H1 (cell line): ENCODE measurements at regions of chr2 and their contacts with region 1.

Region 1: DNA sequence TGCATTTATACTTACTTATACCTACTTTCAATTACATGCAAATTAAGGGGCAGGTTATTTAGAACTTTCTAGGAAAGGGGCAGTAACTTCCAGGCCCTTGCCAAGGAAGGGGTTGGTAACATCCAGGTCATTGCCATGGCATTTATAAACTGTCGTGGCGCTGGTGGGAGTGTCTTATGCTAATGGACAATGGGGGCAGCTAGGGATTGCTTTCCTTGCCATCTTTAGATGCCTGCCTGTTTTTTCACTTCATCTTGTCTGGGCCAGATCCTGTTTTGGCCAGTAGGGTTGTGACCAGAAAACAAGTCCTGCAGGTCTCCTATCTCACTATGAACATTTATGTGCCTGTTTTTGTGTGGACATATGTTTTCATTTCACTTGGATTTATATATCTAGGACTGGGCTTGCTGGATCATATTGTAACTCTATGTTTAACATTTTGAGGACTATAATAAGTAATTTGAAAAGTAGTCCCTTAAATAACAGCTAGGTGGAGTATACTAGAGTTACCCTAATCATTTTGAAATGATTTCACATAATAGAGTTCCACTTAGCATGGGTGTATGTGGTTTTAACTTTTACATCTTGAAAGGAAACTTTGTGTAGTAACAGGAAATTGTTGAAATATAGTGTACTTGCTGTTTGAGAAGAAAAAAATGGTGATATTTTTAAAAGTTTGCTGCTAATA is 56.1 kb downstream of the LCLAT1 start:
- DNase-seq: no peak
- H3K4me3 ChIP-seq: no peak overlapping the region
- H3K27ac ChIP-seq: no peak overlapping the region
- H3K4me1 ChIP-seq: peaks cover 0 to 3% (median 0%) of the 10 kb centered on the region in 4 experiments; a peak in 2 of 7 replicates
- H3K27me3 ChIP-seq: no peaks in the 10 kb centered on the region
- CTCF ChIP-seq: peak in 2 of 3 experiments; percentile 23 to 28; a peak in 1 of 4 replicates
- EP300 ChIP-seq: no peak
- POLR2A ChIP-seq: no peak
- RAD21 ChIP-seq: no peak

Region 2: DNA sequence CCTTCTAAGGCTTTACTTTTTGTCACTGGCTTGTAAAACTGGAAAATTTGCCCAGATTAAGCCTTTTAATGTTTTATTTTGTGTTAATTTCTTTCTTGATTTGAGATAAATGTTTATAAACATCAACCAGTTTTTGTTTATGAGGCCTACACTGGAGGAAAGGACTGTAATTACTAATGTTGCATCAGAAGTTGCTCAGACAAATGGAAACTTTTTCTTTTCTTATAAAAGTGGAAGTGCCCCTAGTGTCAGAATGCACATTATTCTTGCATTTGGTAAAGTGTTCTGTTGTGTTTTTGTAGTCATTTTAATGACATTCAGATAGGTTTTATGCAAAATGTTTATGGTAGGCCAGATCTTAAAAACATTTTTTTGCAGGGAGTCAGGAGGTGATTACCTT is 30.8 kb before region 1 on chr2:
- CTCF ChIA-PET with region 1: no interaction called
- POLR2A ChIA-PET with region 1: no interaction called
- DNase-seq: no peak
- H3K4me3 ChIP-seq: no peak overlapping the region
- H3K27ac ChIP-seq: no peak overlapping the region
- H3K4me1 ChIP-seq: no peaks in the 10 kb centered on the region
- H3K27me3 ChIP-seq: no peaks in the 10 kb centered on the region
- CTCF ChIP-seq: no peak
- EP300 ChIP-seq: no peak
- POLR2A ChIP-seq: no peak
- RAD21 ChIP-seq: no peak

Region 3: DNA sequence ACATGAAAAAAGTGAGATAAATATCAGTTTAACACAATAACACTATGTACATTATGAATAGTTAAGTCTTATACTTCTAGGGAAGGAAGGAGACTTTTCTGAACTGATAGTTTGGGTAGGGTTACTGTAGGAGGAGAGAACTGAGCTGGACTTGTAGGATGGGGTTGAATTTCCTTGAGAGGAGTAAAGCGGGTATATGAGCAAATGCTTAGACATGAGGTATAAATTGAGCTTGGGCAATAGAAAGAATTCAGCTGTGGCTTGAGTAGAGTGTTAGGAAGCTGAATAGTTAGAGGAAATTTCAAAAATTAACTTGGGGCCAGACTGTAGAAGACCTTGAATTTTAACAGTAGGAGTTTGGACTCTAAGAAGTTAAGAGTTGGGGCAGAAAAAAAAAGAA is 11.0 kb before region 1 on chr2:
- CTCF ChIA-PET with region 1: interaction called, 16 read pairs
- POLR2A ChIA-PET with region 1: no interaction called
- DNase-seq: no peak
- H3K4me3 ChIP-seq: no peak overlapping the region
- H3K27ac ChIP-seq: no peak overlapping the region
- H3K4me1 ChIP-seq: no peaks in the 10 kb centered on the region
- H3K27me3 ChIP-seq: no peaks in the 10 kb centered on the region
- CTCF ChIP-seq: no peak
- EP300 ChIP-seq: no peak
- POLR2A ChIP-seq: no peak
- RAD21 ChIP-seq: no peak

Region 4: GRCh38 chr2:30548386-30548785 is 45.2 kb after region 1 on chr2:
- CTCF ChIA-PET with region 1: no interaction called
- POLR2A ChIA-PET with region 1: no interaction called
- DNase-seq: no peak
- H3K4me3 ChIP-seq: no peak overlapping the region
- H3K27ac ChIP-seq: no peak overlapping the region
- H3K4me1 ChIP-seq: no peaks in the 10 kb centered on the region
- H3K27me3 ChIP-seq: no peaks in the 10 kb centered on the region
- CTCF ChIP-seq: no peak
- EP300 ChIP-seq: no peak
- POLR2A ChIP-seq: no peak
- RAD21 ChIP-seq: no peak